Activated naive CD4-positive, alpha-beta T cell treated with anti-CD3 and anti-CD28 coated beads for 36 hours (primary cell): ENCODE measurements at regions of chr7 and their contacts with region 1.

Region 1: GRCh38 chr7:5557920-5558401 is 134.3 kb upstream of the TNRC18 start:
- DNase-seq: peak; percentile 37
- H3K4me3 Mint-ChIP-seq: peak overlapping the region; percentile 60
- H3K27ac Mint-ChIP-seq: peak overlapping the region; percentile 85
- H3K4me1 Mint-ChIP-seq: peaks cover 40% of the 10 kb centered on the region
- H3K27me3 Mint-ChIP-seq: no peaks in the 10 kb centered on the region

Region 2: GRCh38 chr7:5237286-5237685 is 320.7 kb before region 1 on chr7:
- CTCF ChIA-PET with region 1: no interaction called
- intact Hi-C with region 1: loop called (anchors 2 kb)
- DNase-seq: no peak
- H3K4me3 Mint-ChIP-seq: no peak overlapping the region
- H3K27ac Mint-ChIP-seq: no peak overlapping the region
- H3K4me1 Mint-ChIP-seq: peaks cover 18% of the 10 kb centered on the region
- H3K27me3 Mint-ChIP-seq: peaks cover 15% of the 10 kb centered on the region

Region 3: GRCh38 chr7:5387711-5388245 is 170.2 kb before region 1 on chr7:
- CTCF ChIA-PET with region 1: no interaction called
- intact Hi-C with region 1: no loop called
- DNase-seq: no peak
- H3K4me3 Mint-ChIP-seq: no peak overlapping the region
- H3K27ac Mint-ChIP-seq: no peak overlapping the region
- H3K4me1 Mint-ChIP-seq: peaks cover 18% of the 10 kb centered on the region
- H3K27me3 Mint-ChIP-seq: no peaks in the 10 kb centered on the region

Region 4: GRCh38 chr7:5494683-5495561 is 63.0 kb before region 1 on chr7:
- CTCF ChIA-PET with region 1: interaction called, 12 read pairs
- intact Hi-C with region 1: loop called (anchors 1 kb)
- DNase-seq: peak; percentile 88
- H3K4me3 Mint-ChIP-seq: no peak overlapping the region
- H3K27ac Mint-ChIP-seq: no peak overlapping the region
- H3K4me1 Mint-ChIP-seq: peaks cover 26% of the 10 kb centered on the region
- H3K27me3 Mint-ChIP-seq: no peaks in the 10 kb centered on the region

Region 5: GRCh38 chr7:5526100-5526905 is 31.7 kb before region 1 on chr7:
- CTCF ChIA-PET with region 1: interaction called, 11 read pairs
- intact Hi-C with region 1: no loop called
- DNase-seq: peak; percentile 58
- H3K4me3 Mint-ChIP-seq: peak overlapping the region; percentile 99
- H3K27ac Mint-ChIP-seq: peak overlapping the region; percentile 95
- H3K4me1 Mint-ChIP-seq: peaks cover 30% of the 10 kb centered on the region
- H3K27me3 Mint-ChIP-seq: no peaks in the 10 kb centered on the region

Region 6: DNA sequence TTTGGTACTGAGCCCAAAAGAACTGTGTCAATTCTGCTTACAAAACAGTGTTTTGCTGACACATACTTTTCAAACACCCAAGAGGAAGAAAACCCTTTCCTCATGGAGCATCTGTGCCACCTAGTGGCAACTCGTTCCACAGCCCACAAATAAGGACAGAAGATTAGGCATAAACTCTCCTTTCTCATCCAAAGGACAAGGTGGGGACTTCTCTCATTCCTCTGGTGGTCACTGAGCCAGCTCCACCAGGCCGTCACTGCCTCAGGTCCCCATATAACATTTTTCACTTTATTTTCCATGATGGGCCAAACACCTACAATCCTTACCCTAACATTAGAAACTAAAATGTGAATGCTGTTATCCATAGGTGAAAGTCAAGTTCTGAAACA is 146.6 kb after region 1 on chr7:
- CTCF ChIA-PET with region 1: interaction called, 24 read pairs
- intact Hi-C with region 1: no loop called
- DNase-seq: peak; percentile 92
- H3K4me3 Mint-ChIP-seq: no peak overlapping the region
- H3K27ac Mint-ChIP-seq: no peak overlapping the region
- H3K4me1 Mint-ChIP-seq: peaks cover 75% of the 10 kb centered on the region
- H3K27me3 Mint-ChIP-seq: no peaks in the 10 kb centered on the region